ENCODE measurements at regions of chr9 and their contacts with region 1.

Region 1: GRCh38 chr9:114953917-114954316 is 23.5 kb upstream of the TNFSF8 start:
- DNase-seq: peak; percentile 48
- H3K4me3 Mint-ChIP-seq: no peak overlapping the region
- H3K27ac Mint-ChIP-seq: no peak overlapping the region
- H3K4me1 Mint-ChIP-seq: peaks cover 35% of the 10 kb centered on the region
- H3K27me3 Mint-ChIP-seq: no peaks in the 10 kb centered on the region

Region 2: GRCh38 chr9:113541019-113541900 is 1412.7 kb before region 1 on chr9:
- CTCF ChIA-PET with region 1: no interaction called
- POLR2A ChIA-PET with region 1: no interaction called
- intact Hi-C with region 1: no loop called
- DNase-seq: no peak
- H3K4me3 Mint-ChIP-seq: no peak overlapping the region
- H3K27ac Mint-ChIP-seq: no peak overlapping the region
- H3K4me1 Mint-ChIP-seq: peaks cover 3% of the 10 kb centered on the region
- H3K27me3 Mint-ChIP-seq: no peaks in the 10 kb centered on the region

Region 3: DNA sequence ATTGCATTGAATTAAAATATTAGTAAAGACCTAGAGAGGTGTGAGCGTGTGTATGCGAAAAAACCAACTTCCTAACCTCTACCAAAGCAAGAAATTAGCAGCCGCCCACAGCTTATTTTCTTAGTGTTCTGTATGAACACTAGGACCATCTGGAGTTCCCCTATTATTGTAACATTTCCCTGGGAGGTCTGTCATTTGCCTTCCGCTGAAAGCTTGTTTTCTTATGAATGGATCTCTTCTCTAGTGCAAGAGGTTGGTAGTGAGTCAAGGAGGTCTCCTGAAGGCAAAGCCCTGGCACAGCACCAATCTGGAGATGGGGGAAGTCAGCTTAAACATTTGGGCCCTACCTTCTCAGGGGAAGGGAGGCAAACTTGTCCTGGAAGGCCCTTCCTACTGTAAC is 34.3 kb before region 1 on chr9:
- CTCF ChIA-PET with region 1: interaction called, 3 read pairs
- POLR2A ChIA-PET with region 1: interaction called, 3 read pairs
- intact Hi-C with region 1: loop called (anchors 5 kb)
- DNase-seq: peak; percentile 68
- H3K4me3 Mint-ChIP-seq: peak overlapping the region; percentile 10
- H3K27ac Mint-ChIP-seq: peak overlapping the region; percentile 76
- H3K4me1 Mint-ChIP-seq: peaks cover 93% of the 10 kb centered on the region
- H3K27me3 Mint-ChIP-seq: no peaks in the 10 kb centered on the region

Region 4: DNA sequence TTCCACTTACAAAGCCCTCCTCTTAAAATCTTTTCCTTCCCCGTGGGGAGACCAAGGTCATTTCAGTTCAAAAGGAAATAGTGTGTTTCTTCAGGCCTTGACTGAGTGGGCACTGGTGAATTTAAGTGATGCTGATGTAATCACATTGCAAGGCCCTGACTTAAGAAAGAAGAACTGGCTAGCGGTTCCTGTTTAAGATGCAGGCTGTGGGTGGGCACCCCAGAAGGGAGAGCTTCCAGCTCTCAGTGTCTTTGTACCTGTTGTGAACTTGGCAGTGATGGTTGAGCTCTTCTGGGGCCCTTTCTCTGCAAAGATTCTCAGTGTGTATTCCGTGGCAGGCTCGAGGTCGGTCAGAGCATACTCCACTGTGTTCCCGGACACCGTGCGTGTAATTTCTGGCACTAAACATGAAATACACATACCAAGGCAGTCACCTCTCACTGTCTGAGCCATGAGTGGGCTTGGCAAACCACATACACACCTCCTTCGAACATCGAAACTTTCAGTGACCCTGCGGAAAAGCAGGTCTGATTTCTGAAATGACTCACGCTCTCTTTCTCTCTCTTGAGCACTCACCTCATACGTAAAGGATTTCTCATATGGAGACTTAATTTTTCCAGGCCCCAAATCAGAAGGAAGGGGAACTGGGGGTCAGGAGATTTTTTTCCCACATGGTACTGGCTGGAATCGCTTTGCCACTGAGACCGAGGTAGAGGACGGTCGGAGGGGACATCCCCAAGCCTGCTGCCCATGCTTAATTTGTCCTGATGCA is 82.1 kb after region 1 on chr9:
- CTCF ChIA-PET with region 1: no interaction called
- POLR2A ChIA-PET with region 1: no interaction called
- intact Hi-C with region 1: loop called (anchors 2 kb)
- DNase-seq: peak; percentile 83
- H3K4me3 Mint-ChIP-seq: peak overlapping the region; percentile 62
- H3K27ac Mint-ChIP-seq: peak overlapping the region; percentile 91
- H3K4me1 Mint-ChIP-seq: peaks cover 33% of the 10 kb centered on the region
- H3K27me3 Mint-ChIP-seq: no peaks in the 10 kb centered on the region

Region 5: GRCh38 chr9:115204904-115205453 is 251.1 kb after region 1 on chr9:
- CTCF ChIA-PET with region 1: no interaction called
- POLR2A ChIA-PET with region 1: no interaction called
- intact Hi-C with region 1: loop called (anchors 10 kb)
- DNase-seq: no peak
- H3K4me3 Mint-ChIP-seq: no peak overlapping the region
- H3K27ac Mint-ChIP-seq: no peak overlapping the region
- H3K4me1 Mint-ChIP-seq: peaks cover 27% of the 10 kb centered on the region
- H3K27me3 Mint-ChIP-seq: peaks cover 46% of the 10 kb centered on the region

Measured in activated CD4-positive, alpha-beta memory T cell treated with anti-CD3 and anti-CD28 coated beads for 36 hours (primary cell).